ENCODE measurements at regions of chr1 and their contacts with region 1.

Region 1: DNA sequence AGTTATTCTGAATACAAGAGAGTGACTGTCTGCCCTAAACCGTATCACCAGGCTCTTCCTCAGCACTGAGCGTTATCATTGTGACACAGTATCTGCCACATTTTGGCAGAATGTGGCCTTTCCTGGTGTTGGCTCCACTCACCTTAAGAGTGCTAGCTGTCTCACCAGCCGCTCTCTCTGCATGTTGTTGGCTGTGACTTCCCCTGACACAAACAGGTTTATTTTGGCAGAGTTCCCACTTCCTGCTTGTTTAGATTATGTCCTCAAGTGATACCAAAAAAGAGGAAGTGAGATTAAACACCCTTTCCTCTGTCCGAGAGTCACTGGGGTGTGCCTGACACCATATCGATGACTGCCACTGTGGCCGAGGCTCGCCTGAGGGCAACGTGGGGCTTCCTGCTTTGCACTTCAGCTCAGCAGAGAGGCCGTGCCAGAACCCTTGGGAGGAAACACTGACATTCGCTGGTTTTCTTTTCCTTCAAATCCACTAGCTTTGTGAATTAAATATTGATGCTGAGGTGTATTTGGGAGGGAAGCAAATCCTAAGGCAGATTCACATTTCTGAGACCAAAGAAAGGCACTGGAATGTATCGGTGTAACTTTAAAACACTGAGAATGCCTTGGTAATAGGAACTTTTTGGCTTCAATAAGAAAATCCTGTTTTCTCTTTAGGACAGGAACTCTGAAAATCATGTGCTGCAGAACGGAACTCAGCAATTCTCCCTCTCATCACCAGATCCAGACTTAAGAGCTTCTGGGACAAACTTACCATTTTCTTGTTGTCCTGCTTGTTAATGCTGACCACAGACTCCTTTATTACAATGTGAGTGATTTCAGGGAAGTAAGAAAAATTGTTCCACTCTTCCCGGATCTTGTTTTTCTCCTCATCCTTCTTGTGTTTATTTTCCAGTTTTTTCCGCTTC is 102.1 kb downstream of the JAK1 start:
- DNase-seq: peak; percentile 92
- ATAC-seq: peak; percentile 95
- H3K4me3 ChIP-seq: peak overlapping the region in 2 of 5 experiments; percentile 2 to 5
- H3K4me3 Mint-ChIP-seq: peak overlapping the region; percentile 77
- H3K27ac ChIP-seq: peak overlapping the region; percentile 74 to 79
- H3K27ac Mint-ChIP-seq: peak overlapping the region; percentile 90
- H3K4me1 ChIP-seq: peaks cover 63 to 66% of the 10 kb centered on the region in 2 donors
- H3K4me1 Mint-ChIP-seq: peaks cover 75% of the 10 kb centered on the region
- H3K27me3 ChIP-seq: no peaks in the 10 kb centered on the region
- H3K27me3 Mint-ChIP-seq: no peaks in the 10 kb centered on the region
- CTCF ChIP-seq: no peak

Region 2: DNA sequence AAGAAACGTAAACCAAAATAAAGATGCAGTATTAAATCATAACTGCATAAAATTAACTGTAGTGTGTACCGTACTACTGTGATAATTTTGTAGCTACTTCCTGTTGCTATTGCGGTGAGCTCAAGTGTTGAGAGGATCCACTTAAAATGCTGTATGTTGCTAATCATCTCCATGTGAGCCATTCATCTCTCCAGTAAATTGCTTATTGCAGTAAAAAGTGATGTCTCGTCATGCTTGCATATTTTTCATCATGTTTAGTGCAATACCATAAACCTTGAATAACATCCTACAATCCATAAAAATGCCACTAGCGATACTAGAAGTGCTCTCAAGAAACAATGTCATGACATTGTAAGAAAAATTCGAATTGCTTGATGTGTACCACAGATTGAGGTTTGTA is 53.1 kb before region 1 on chr1:
- CTCF ChIA-PET with region 1: no interaction called
- POLR2A ChIA-PET with region 1: no interaction called
- intact Hi-C with region 1: no loop called
- DNase-seq: no peak
- ATAC-seq: no peak
- H3K4me3 ChIP-seq: no peak overlapping the region
- H3K4me3 Mint-ChIP-seq: no peak overlapping the region
- H3K27ac ChIP-seq: no peak overlapping the region
- H3K27ac Mint-ChIP-seq: no peak overlapping the region
- H3K4me1 ChIP-seq: no peaks in the 10 kb centered on the region
- H3K4me1 Mint-ChIP-seq: no peaks in the 10 kb centered on the region
- H3K27me3 ChIP-seq: no peaks in the 10 kb centered on the region
- H3K27me3 Mint-ChIP-seq: no peaks in the 10 kb centered on the region
- CTCF ChIP-seq: no peak

Region 3: GRCh38 chr1:64881281-64881680 is 17.0 kb after region 1 on chr1:
- CTCF ChIA-PET with region 1: interaction called, 3 read pairs
- POLR2A ChIA-PET with region 1: no interaction called
- intact Hi-C with region 1: loop called (anchors 2 kb)
- DNase-seq: no peak
- ATAC-seq: no peak
- H3K4me3 ChIP-seq: no peak overlapping the region
- H3K4me3 Mint-ChIP-seq: no peak overlapping the region
- H3K27ac ChIP-seq: no peak overlapping the region
- H3K27ac Mint-ChIP-seq: peak overlapping the region; percentile 26
- H3K4me1 ChIP-seq: peaks cover 0 to 6% of the 10 kb centered on the region in 2 donors
- H3K4me1 Mint-ChIP-seq: peaks cover 30% of the 10 kb centered on the region
- H3K27me3 ChIP-seq: no peaks in the 10 kb centered on the region
- H3K27me3 Mint-ChIP-seq: no peaks in the 10 kb centered on the region
- CTCF ChIP-seq: no peak

Region 4: GRCh38 chr1:64906447-64906846 is 42.2 kb after region 1 on chr1:
- CTCF ChIA-PET with region 1: no interaction called
- POLR2A ChIA-PET with region 1: no interaction called
- intact Hi-C with region 1: no loop called
- DNase-seq: no peak
- ATAC-seq: no peak
- H3K4me3 ChIP-seq: no peak overlapping the region
- H3K4me3 Mint-ChIP-seq: peak overlapping the region; percentile 4
- H3K27ac ChIP-seq: no peak overlapping the region
- H3K27ac Mint-ChIP-seq: peak overlapping the region; percentile 34
- H3K4me1 ChIP-seq: peaks cover 30 to 50% of the 10 kb centered on the region in 2 donors
- H3K4me1 Mint-ChIP-seq: peaks cover 87% of the 10 kb centered on the region
- H3K27me3 ChIP-seq: no peaks in the 10 kb centered on the region
- H3K27me3 Mint-ChIP-seq: no peaks in the 10 kb centered on the region
- CTCF ChIP-seq: no peak

Region 5: GRCh38 chr1:64966158-64966971 is 102.1 kb after region 1 on chr1 and contains the start of gene JAK1:
- CTCF ChIA-PET with region 1: interaction called, 5 read pairs
- POLR2A ChIA-PET with region 1: interaction called, 9 read pairs
- intact Hi-C with region 1: loop called (anchors 1 kb)
- DNase-seq: peak; percentile 92
- ATAC-seq: peak; percentile 83
- H3K4me3 ChIP-seq: peak within 1 kb of the TSS; percentile 73 to 100 (median 91)
- H3K4me3 Mint-ChIP-seq: peak within 1 kb of the TSS; percentile 93
- H3K27ac ChIP-seq: peak within 1 kb of the TSS; percentile 79 to 96
- H3K27ac Mint-ChIP-seq: peak within 1 kb of the TSS; percentile 96
- H3K4me1 ChIP-seq: peaks cover 44 to 49% of the 10 kb centered on the region in 2 donors
- H3K4me1 Mint-ChIP-seq: peaks cover 43% of the 10 kb centered on the region
- H3K27me3 ChIP-seq: no peaks in the 10 kb centered on the region
- H3K27me3 Mint-ChIP-seq: no peaks in the 10 kb centered on the region
- CTCF ChIP-seq: no peak
- total RNA-seq, gene JAK1: 244 and 260 TPM in 2 replicates

Region 6: GRCh38 chr1:65036545-65037180 is 172.4 kb after region 1 on chr1:
- CTCF ChIA-PET with region 1: interaction called, 9 read pairs
- POLR2A ChIA-PET with region 1: no interaction called
- intact Hi-C with region 1: loop called (anchors 1 kb)
- DNase-seq: no peak
- ATAC-seq: no peak
- H3K4me3 ChIP-seq: no peak overlapping the region
- H3K4me3 Mint-ChIP-seq: no peak overlapping the region
- H3K27ac ChIP-seq: no peak overlapping the region
- H3K27ac Mint-ChIP-seq: no peak overlapping the region
- H3K4me1 ChIP-seq: peaks cover 11 to 12% of the 10 kb centered on the region in 2 donors
- H3K4me1 Mint-ChIP-seq: peaks cover 14% of the 10 kb centered on the region
- H3K27me3 ChIP-seq: no peaks in the 10 kb centered on the region
- H3K27me3 Mint-ChIP-seq: no peaks in the 10 kb centered on the region
- CTCF ChIP-seq: no peak

Region 7: GRCh38 chr1:65419681-65420589 is 555.7 kb after region 1 on chr1:
- CTCF ChIA-PET with region 1: no interaction called
- POLR2A ChIA-PET with region 1: no interaction called
- intact Hi-C with region 1: loop called (anchors 5 kb)
- DNase-seq: peak; percentile 99
- ATAC-seq: peak; percentile 91
- H3K4me3 ChIP-seq: peak overlapping the region; percentile 66 to 97 (median 92)
- H3K4me3 Mint-ChIP-seq: no peak overlapping the region
- H3K27ac ChIP-seq: peak overlapping the region; percentile 66 to 75
- H3K27ac Mint-ChIP-seq: no peak overlapping the region
- H3K4me1 ChIP-seq: peaks cover 14 to 23% of the 10 kb centered on the region in 2 donors
- H3K4me1 Mint-ChIP-seq: peaks cover 16% of the 10 kb centered on the region
- H3K27me3 ChIP-seq: peaks cover 0 to 8% (median 5%) of the 10 kb centered on the region in 4 experiments
- H3K27me3 Mint-ChIP-seq: peaks cover 15% of the 10 kb centered on the region
- CTCF ChIP-seq: no peak

Measured in B cell (primary cell).